ENCODE measurements at regions of chr20 and their contacts with region 1.

Region 1: GRCh38 chr20:31661625-31662371 is 24.1 kb downstream of the COX4I2 start:
- DNase-seq: peak; percentile 84
- H3K4me3 Mint-ChIP-seq: peak overlapping the region; percentile 72
- H3K27ac Mint-ChIP-seq: peak overlapping the region; percentile 86
- H3K4me1 Mint-ChIP-seq: peaks cover 49% of the 10 kb centered on the region
- H3K27me3 Mint-ChIP-seq: no peaks in the 10 kb centered on the region

Region 2: GRCh38 chr20:31630187-31630790 is 31.5 kb before region 1 on chr20:
- CTCF ChIA-PET with region 1: interaction called, 23 read pairs
- intact Hi-C with region 1: no loop called
- DNase-seq: no peak
- H3K4me3 Mint-ChIP-seq: no peak overlapping the region
- H3K27ac Mint-ChIP-seq: no peak overlapping the region
- H3K4me1 Mint-ChIP-seq: no peaks in the 10 kb centered on the region
- H3K27me3 Mint-ChIP-seq: no peaks in the 10 kb centered on the region

Region 3: GRCh38 chr20:31674895-31675827 is 13.4 kb after region 1 on chr20:
- CTCF ChIA-PET with region 1: interaction called, 39 read pairs
- intact Hi-C with region 1: loop called (anchors 1 kb)
- DNase-seq: peak; percentile 86
- H3K4me3 Mint-ChIP-seq: peak overlapping the region; percentile 84
- H3K27ac Mint-ChIP-seq: peak overlapping the region; percentile 97
- H3K4me1 Mint-ChIP-seq: peaks cover 79% of the 10 kb centered on the region
- H3K27me3 Mint-ChIP-seq: no peaks in the 10 kb centered on the region

Region 4: GRCh38 chr20:31684153-31685015 is 22.6 kb after region 1 on chr20:
- CTCF ChIA-PET with region 1: interaction called, 20 read pairs
- intact Hi-C with region 1: no loop called
- DNase-seq: no peak
- H3K4me3 Mint-ChIP-seq: no peak overlapping the region
- H3K27ac Mint-ChIP-seq: peak overlapping the region; percentile 70
- H3K4me1 Mint-ChIP-seq: peaks cover 78% of the 10 kb centered on the region
- H3K27me3 Mint-ChIP-seq: no peaks in the 10 kb centered on the region

Region 5: DNA sequence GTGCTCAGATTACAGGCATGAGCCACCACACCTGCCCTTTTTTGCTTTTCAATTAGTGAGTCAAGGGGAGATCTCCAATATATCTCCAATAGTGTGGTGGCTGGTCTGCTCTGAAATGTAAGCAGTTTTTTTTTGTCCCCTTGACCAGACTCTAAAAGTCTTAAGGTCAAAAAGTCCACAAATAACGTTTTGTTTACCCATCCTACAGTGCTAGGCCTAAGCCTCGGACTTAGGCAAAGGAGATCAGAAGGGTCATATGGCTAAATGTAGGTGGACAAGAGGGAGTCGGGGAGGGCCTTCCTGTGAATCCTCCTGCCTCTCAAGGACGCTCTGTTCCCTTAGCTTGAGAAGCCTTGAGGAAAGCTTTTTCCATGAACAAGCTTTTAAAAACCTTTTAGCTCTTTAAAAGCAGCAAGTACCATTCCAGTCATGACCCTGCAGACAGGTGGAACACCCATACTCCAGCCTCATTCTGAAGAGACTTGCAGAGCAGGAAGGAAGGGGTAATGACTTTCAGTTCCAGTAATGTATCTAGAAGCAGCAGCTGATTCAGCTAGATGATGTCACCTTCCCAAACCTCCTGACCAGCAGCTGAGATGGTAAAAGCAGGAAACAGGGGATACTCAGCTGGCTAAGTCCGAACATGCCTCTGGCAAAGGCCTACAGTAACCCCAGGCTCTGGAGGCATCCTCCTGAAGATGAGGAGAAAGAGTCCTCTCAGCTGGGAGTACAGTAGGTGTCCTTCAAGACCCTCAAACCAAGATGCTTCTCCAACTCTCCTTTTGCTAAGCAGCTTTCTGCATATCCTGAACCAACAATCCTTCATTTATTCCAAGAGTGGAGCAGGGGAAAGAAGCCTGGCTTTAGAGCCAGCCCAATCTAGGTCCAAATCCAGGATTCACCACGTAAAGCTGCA is 37.3 kb after region 1 on chr20:
- CTCF ChIA-PET with region 1: interaction called, 37 read pairs
- intact Hi-C with region 1: loop called (anchors 1 kb)
- DNase-seq: peak; percentile 73
- H3K4me3 Mint-ChIP-seq: no peak overlapping the region
- H3K27ac Mint-ChIP-seq: peak overlapping the region; percentile 91
- H3K4me1 Mint-ChIP-seq: peaks cover 76% of the 10 kb centered on the region
- H3K27me3 Mint-ChIP-seq: no peaks in the 10 kb centered on the region